OCI-LY7 (cell line): ENCODE measurements at regions of chr15 and their contacts with region 1.

Region 1: DNA sequence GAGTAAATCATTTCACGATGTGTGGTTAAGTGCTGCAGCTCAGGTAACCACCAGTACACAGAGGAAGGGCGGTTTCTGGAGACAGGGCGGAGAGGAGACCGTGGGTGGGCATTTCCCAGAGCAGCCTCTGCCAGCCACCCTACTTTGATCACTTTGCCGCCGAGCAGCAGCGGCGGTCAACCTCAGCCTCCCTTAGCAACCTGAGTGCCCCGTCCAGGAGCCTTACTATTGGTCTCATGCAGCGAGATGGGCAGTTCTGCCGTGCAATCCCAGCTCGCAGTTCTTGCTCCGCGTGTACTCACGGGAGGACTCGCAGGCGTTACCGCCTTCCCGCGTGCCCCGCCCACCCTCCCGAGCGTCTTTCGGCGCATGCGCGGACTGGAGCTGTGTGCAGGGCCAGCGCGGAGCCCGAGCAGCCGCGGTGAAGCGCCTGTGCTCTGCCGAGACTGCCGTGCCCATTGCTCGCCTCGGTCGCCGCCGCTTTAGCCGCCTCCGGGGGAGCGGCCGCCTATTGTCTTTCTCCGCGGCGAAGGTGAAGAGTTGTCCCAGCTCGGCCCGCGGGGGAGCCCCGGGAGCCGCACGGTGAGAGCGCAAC is at the start of gene AKAP13:
- DNase-seq: peak; percentile 100
- H3K4me3 ChIP-seq: peak within 1 kb of the TSS; percentile 86
- H3K27ac ChIP-seq: peak within 1 kb of the TSS; percentile 88
- H3K4me1 ChIP-seq: peaks cover 32% of the 10 kb centered on the region
- CTCF ChIP-seq: no peak
- total RNA-seq, gene AKAP13: 124 and 140 TPM in 2 replicates

Region 2: GRCh38 chr15:85306946-85307708 is 73.2 kb before region 1 on chr15:
- CTCF ChIA-PET with region 1: no interaction called
- POLR2A ChIA-PET with region 1: no interaction called
- intact Hi-C with region 1: no loop called
- DNase-seq: peak; percentile 32
- H3K4me3 ChIP-seq: no peak overlapping the region
- H3K27ac ChIP-seq: no peak overlapping the region
- H3K4me1 ChIP-seq: peaks cover 14% of the 10 kb centered on the region
- CTCF ChIP-seq: no peak

Region 3: DNA sequence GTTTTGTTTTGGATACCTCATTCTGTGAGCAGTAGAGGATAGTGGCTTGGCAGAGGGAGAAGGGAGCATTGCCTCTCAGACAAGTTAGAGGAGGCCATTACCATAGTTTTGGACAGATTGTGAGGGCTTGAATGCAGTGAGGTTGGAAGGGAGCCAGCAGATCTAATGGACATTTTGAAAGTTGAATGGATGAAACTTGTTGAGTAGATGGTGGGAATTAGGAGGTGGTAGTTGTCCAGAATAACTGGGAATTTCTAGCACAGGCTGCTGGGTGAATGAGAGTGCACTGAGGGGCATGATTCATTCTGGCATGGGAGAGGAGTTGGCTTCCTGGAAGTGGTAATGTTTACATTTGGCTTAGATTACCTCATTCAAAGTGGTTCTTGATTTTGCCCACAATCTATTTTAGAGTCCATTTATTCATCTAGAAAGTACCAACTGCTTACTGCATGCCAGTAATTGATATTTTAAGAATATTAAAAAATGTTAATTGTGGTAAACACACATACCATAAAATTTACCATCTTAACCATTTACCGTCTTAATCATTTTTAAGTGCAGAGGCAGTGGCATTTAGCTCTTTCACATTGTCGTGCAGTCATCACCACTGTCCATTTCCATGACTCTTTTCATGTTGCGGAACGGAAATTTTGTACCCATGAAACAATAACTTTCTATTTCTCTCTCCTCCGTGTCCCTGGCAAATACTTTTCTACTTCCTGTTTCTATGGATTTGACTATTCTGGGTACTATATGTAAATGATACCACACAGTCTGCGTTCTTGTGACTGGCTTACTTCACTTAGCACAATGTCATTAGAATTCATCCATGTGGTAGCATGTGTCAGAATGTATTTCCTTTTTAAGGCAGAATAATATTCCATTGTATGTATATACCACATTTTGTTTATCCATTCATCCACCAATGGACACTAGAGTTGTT is 27.8 kb after region 1 on chr15:
- CTCF ChIA-PET with region 1: interaction called, 4 read pairs
- POLR2A ChIA-PET with region 1: interaction called, 335 read pairs
- intact Hi-C with region 1: loop called (anchors 1 kb)
- DNase-seq: peak; percentile 55
- H3K4me3 ChIP-seq: peak overlapping the region; percentile 16
- H3K27ac ChIP-seq: peak overlapping the region; percentile 97
- H3K4me1 ChIP-seq: peaks cover 92% of the 10 kb centered on the region
- CTCF ChIP-seq: no peak

Region 4: DNA sequence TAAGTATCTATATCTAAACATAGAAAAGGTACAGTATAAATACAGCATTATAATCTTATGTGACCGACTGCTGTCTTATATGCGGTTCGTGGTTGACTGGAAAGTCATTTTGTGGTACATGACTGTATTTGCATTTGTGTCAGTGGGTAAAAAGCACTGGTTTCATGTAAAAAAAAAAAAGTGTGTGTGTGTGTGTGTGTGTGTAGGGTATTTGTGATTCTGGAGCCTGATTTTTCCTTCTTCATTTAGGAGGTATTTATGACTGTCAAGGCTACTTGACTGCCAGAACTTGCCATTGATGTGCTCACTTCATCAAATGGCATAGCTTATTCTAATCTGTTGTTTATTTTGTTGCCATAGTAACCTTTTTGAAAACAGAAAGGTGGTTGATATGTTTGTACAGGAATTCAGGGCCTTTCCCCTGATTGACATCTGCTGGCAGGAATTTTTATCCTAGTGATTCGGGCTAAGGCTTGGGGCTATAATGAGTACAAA is 63.3 kb after region 1 on chr15:
- CTCF ChIA-PET with region 1: interaction called, 3 read pairs
- POLR2A ChIA-PET with region 1: interaction called, 7 read pairs
- intact Hi-C with region 1: loop called (anchors 1 kb)
- DNase-seq: peak; percentile 52
- H3K4me3 ChIP-seq: peak overlapping the region; percentile 56
- H3K27ac ChIP-seq: peak overlapping the region; percentile 70
- H3K4me1 ChIP-seq: peaks cover 57% of the 10 kb centered on the region
- CTCF ChIP-seq: no peak

Region 5: GRCh38 chr15:85475317-85475701 is 95.0 kb after region 1 on chr15:
- CTCF ChIA-PET with region 1: interaction called, 3 read pairs
- POLR2A ChIA-PET with region 1: interaction called, 12 read pairs
- intact Hi-C with region 1: loop called (anchors 2 kb)
- DNase-seq: peak; percentile 85
- H3K4me3 ChIP-seq: peak overlapping the region; percentile 52
- H3K27ac ChIP-seq: peak overlapping the region; percentile 92
- H3K4me1 ChIP-seq: peaks cover 99% of the 10 kb centered on the region
- CTCF ChIP-seq: no peak

Region 6: DNA sequence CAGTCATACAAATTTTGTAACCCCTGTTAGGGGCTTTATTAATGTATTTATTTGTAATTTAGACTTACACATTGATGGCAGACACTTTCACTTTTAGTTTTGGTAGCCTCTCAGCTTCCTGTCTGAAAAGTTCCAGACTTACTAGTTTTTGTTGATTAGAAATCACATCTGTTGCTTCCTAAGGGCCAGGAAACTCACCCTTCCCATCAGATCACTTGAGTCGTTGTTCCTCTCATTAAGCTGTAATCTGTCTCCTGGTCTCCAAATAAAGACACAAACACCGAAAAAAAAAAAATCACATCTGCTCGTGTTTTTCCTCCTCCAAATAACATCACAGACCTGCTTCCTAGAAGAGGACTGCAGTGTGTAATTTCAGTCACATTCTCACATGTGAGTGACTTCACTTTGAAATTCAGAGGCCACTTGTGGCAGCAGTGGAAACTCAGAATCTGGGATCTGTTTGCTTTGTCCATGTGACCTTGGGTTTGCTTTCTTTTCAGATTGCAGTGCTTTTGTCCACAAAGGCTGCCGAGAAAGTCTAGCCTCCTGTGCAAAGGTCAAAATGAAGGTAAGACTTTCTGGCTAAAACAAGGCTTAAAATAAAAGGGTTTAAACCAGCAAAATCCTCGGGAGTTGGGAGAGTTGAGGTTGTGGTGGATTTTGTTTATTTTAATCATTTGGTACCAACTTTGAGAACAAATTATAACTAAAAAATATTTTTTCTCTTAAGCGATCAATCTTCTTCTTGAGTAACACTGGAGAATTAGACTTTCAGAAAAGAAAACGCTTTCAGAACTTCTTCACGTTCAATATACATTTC is 327.4 kb after region 1 on chr15:
- CTCF ChIA-PET with region 1: no interaction called
- POLR2A ChIA-PET with region 1: no interaction called
- intact Hi-C with region 1: loop called (anchors 10 kb)
- DNase-seq: peak; percentile 63
- H3K4me3 ChIP-seq: peak overlapping the region; percentile 63
- H3K27ac ChIP-seq: peak overlapping the region; percentile 90
- H3K4me1 ChIP-seq: peaks cover 59% of the 10 kb centered on the region
- CTCF ChIP-seq: no peak